HCT116 (cell line): ENCODE measurements at regions of chr2 and their contacts with region 1.

Region 1: DNA sequence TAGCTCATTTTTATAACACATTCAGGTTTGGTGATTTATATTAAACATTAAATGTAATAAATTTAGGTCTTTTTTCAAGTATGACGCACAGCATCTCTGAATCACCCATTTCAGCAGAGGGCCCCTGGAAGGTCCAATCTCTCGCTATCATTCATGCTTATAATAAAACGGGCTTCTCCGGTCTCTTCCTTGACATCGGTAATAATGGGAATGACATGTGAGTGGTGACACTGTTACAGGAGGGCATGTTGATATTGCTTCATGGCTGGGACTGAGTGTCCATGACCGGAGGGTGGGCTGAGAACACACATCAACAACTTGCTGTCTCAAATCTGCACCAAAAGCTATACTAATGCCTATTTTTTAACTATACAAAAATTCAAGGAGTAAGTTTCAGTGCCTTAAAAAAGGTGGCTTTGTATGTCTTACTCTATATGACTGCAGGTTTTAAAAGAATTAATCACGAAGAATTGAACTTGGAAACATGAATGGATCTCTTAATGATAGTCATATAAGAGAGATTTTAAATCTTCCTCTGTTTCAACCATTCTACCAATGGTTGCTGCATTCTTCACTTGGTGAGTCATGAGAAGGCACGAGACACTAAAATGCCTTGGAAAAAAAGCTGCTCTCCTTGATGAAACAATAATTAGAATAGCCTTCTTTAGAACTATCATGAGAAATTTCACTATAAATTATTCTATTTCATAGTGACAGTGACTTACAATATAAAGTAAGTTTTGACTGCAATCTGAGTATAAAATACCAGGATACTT is 101.9 kb upstream of the NRP2 start:
- DNase-seq: no peak
- ATAC-seq: no peak
- H3K4me3 ChIP-seq: no peak overlapping the region
- H3K27ac ChIP-seq: no peak overlapping the region
- H3K4me1 ChIP-seq: no peaks in the 10 kb centered on the region
- H3K27me3 ChIP-seq: no peaks in the 10 kb centered on the region
- CTCF ChIP-seq: no peak
- POLR2A ChIP-seq: no peak
- RAD21 ChIP-seq: no peak

Region 2: GRCh38 chr2:204145263-204145751 is 1435.1 kb before region 1 on chr2:
- CTCF ChIA-PET with region 1: no interaction called
- POLR2A ChIA-PET with region 1: no interaction called
- RAD21 ChIA-PET with region 1: no interaction called
- intact Hi-C with region 1: loop called (anchors 5 kb)
- DNase-seq: peak; percentile 60
- ATAC-seq: peak; percentile 100
- H3K4me3 ChIP-seq: no peak overlapping the region
- H3K27ac ChIP-seq: no peak overlapping the region
- H3K4me1 ChIP-seq: no peaks in the 10 kb centered on the region
- H3K27me3 ChIP-seq: peaks cover 4% of the 10 kb centered on the region; the same call in 1 of the 2 replicates
- CTCF ChIP-seq: peak; percentile 73 to 98 (median 90)
- POLR2A ChIP-seq: no peak
- RAD21 ChIP-seq: peak; percentile 91